Activated CD4-positive, alpha-beta T cell treated with anti-CD3 and anti-CD28 coated beads, Interleukin-2, amount 10 ng/mL, durations not matched to agents 24 days and 14 days (primary cell): ENCODE measurements at regions of chr3 and their contacts with region 1.

Region 1: DNA sequence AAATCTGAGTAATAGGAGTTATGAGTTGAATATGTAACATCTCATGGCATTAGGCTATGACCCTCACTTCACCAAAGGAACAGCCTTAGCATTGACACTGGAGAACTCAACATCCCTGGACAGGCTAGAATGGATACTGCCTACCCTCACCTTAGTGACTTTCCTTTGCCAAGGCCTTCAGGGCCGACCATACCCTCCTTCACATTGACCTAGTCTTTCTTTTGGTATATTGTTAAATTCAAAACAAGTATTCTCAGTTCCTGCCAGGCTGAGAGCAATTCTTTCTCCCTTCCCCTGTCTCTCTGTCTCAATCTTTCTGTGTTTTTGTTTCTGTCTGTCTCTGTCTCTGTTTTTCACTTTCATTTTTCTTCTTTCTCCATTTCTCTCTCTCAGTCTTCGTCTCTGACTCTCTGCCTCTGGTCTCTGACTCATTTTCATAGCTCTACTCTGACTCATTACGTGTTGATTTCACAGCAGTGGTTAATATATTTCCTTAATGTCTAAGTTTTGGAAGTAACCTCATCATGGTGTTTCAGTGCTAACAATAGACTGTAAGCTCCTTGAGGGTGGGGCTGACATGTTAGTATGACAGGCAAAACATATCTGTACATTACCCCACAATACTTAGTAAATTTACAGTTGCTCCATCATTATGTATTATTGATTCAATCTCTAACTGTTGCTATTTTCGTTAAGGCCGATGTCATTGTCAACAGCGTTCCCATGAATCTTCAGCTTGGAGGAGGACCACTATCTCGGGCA is 32.5 kb downstream of the PARP15 start:
- DNase-seq: peak; percentile 81
- H3K4me3 Mint-ChIP-seq: peak overlapping the region; percentile 72
- H3K27ac Mint-ChIP-seq: peak overlapping the region; percentile 90
- H3K4me1 Mint-ChIP-seq: peaks cover 32% of the 10 kb centered on the region
- H3K27me3 Mint-ChIP-seq: no peaks in the 10 kb centered on the region

Region 2: DNA sequence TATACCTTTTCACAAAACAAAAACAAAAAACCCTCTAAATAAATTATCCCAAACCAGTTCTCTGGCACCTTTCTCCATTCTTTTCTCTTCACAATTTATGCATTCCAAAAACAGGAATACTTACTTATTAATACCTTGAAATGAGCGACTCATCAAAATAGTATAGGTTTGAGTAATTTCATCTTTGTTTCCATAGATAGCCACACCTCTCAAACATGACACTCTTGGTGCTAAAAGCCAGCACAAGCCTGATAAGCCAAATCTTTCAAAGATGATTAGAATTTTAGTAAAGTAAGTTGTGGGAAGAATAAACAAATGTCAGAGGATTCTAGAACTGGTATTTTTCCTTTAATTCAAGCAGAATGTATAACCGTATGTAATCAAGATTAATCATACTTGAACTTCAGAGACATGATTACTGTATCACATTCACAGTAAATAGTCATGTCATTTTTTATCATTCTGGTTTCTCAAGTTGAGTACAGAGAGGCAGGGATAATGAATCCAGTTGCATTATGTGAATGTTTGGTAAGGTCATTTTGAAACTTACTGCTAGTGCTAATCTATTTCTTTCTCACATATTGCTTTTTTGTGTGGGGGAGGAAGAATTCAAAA is 182.0 kb before region 1 on chr3:
- intact Hi-C with region 1: loop called (anchors 1 kb)
- DNase-seq: no peak
- H3K4me3 Mint-ChIP-seq: no peak overlapping the region
- H3K27ac Mint-ChIP-seq: peak overlapping the region; percentile 72
- H3K4me1 Mint-ChIP-seq: peaks cover 13% of the 10 kb centered on the region
- H3K27me3 Mint-ChIP-seq: no peaks in the 10 kb centered on the region

Region 3: DNA sequence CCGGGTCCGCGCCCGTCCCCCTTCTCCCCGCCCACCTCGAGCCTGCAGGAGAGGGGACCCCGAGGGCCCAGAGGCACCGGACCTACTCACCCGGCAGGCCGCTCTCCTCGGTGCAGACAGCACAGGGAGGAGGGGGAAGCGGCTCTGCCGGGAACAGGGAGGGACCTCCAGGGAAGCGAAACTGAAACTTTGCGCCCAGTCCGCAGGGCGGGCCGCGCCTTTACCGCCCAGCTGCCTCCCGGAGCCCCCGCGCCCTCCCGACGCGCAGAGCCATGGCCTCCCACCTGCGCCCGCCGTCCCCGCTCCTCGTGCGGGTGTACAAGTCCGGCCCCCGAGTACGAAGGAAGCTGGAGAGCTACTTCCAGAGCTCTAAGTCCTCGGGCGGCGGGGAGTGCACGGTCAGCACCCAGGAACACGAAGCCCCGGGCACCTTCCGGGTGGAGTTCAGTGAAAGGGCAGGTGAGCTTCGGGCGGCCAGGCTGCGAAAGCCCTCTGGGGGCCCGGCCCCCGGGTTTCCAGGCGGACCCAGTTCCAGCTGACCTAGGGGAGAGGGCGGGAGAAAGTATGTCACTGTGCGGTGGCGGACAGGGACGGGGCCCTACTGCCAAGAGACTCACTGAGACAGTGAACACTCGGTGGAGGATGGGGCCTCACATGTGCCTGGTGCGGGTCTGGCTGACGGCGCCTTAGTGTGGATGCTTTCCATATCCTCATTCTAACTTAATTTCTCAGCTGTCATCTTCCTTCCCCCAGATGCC is 45.6 kb before region 1 on chr3 and contains the starts of genes DTX3L and PARP9:
- intact Hi-C with region 1: loop called (anchors 1 kb)
- DNase-seq: peak; percentile 97
- H3K4me3 Mint-ChIP-seq: peak within 1 kb of the TSS; percentile 95
- H3K27ac Mint-ChIP-seq: peak within 1 kb of the TSS; percentile 98
- H3K4me1 Mint-ChIP-seq: peaks cover 71% of the 10 kb centered on the region
- H3K27me3 Mint-ChIP-seq: no peaks in the 10 kb centered on the region
- total RNA-seq, gene DTX3L: 39.8 and 43.7 TPM in 2 replicates
- total RNA-seq, gene PARP9: 45.7 and 47.9 TPM in 2 replicates

Region 4: GRCh38 chr3:122642935-122643334 is 33.0 kb after region 1 on chr3:
- intact Hi-C with region 1: loop called (anchors 2 kb)
- DNase-seq: peak; percentile 59
- H3K4me3 Mint-ChIP-seq: peak overlapping the region; percentile 68
- H3K27ac Mint-ChIP-seq: peak overlapping the region; percentile 73
- H3K4me1 Mint-ChIP-seq: peaks cover 36% of the 10 kb centered on the region
- H3K27me3 Mint-ChIP-seq: no peaks in the 10 kb centered on the region

Region 5: DNA sequence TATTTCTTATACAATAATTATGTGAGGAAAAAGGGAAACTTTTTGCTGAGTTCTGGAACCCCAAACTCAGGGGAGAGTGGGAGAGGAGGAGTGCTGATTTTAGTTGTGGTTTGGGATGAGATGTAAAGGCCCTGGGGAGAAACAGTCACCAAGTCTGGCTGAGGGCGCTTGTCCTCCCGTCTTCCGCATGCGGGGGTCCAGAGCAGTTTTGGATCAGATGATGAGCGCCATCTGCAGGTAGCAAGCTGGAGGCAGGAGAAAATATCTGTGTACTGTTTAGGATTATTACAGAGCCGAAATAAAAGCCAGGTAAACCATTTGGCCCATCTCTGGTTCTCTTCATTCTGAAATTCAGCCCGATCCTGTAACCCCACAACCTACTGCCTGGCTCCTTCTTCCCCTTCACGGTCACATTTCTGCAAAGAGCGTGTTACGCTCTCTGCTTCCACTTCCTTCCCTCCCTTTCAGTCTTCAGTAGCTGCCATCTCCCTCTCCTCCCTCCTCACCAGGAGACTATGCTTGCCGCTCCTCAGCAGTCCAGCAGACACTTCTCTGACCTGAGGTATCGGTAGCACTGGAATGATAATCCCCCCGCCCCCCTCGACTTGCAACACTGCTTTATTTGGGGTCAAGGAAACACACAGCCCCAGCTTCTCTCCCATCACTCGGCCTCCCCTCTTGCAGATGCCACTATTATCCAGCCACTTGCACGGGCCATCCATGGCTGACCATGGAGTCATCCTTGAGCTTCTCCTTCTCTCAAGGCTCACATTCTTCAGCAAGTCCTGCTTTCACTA is 69.3 kb after region 1 on chr3:
- intact Hi-C with region 1: loop called (anchors 1 kb)
- DNase-seq: peak; percentile 94
- H3K4me3 Mint-ChIP-seq: peak overlapping the region; percentile 99
- H3K27ac Mint-ChIP-seq: peak overlapping the region; percentile 98
- H3K4me1 Mint-ChIP-seq: peaks cover 56% of the 10 kb centered on the region
- H3K27me3 Mint-ChIP-seq: no peaks in the 10 kb centered on the region